K562 (cell line): ENCODE measurements at regions of chr17 and their contacts with region 1.

Region 1: DNA sequence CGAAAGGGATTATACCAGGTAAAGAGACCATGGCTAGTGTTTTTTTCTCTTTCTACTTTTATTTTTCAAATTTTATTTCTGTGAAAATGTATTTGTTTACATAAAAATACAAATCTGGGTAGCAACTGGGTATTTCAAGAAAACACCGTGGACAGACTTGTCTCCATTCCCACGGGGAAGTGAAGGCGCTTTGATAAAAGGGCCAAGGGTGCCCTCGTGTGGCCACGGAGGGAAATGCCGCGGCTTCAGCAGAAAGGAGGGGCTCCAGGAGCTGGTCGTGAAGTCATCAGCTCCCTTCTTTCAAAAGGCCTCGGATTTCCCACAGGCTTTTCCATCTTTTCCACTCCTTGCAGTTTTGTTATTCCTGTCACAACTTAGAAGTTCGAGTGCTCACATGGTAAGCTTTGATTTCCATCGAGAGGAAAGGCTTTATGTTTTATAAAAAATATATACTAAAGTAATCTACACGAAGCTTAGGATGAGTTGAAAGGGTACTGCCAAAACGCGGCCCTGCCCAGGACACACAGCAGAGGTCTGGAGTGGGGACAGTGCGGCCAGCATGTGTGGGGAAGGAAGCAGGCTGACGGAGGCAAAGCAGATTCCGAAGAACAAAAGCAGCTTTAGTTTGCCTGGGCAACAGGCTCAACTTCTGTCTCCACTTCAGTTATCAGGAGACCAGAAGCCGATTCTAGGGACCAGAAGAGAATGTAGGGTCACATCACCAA is 15.3 kb upstream of the MNT start:
- DNase-seq: peak; percentile 69 to 85 (median 74)
- ATAC-seq: peak; percentile 90
- H3K4me3 ChIP-seq: no peak overlapping the region
- H3K27ac ChIP-seq: no peak overlapping the region
- H3K4me1 ChIP-seq: no peaks in the 10 kb centered on the region; a peak in 1 of 5 replicates
- H3K27me3 ChIP-seq: no peaks in the 10 kb centered on the region
- CTCF ChIP-seq: peak; percentile 75 to 90 (median 89)
- EP300 ChIP-seq: no peak
- POLR2A ChIP-seq: no peak
- RAD21 ChIP-seq: peak; percentile 83 to 86

Region 2: GRCh38 chr17:2374549-2375277 is 41.5 kb before region 1 on chr17:
- CTCF ChIA-PET with region 1: interaction called, 78 read pairs
- POLR2A ChIA-PET with region 1: interaction called, 3 read pairs
- in situ Hi-C with region 1: loop called (anchors 5 kb)
- intact Hi-C with region 1: no loop called
- DNase-seq: no peak
- ATAC-seq: no peak
- H3K4me3 ChIP-seq: no peak overlapping the region
- H3K27ac ChIP-seq: no peak overlapping the region
- H3K4me1 ChIP-seq: peaks cover 0 to 21% of the 10 kb centered on the region in 2 experiments; a peak in 3 of 5 replicates
- H3K27me3 ChIP-seq: no peaks in the 10 kb centered on the region
- CTCF ChIP-seq: no peak
- EP300 ChIP-seq: no peak
- POLR2A ChIP-seq: no peak
- RAD21 ChIP-seq: no peak

Region 3: GRCh38 chr17:2380226-2380922 is 35.8 kb before region 1 on chr17:
- CTCF ChIA-PET with region 1: interaction called, 78 read pairs
- POLR2A ChIA-PET with region 1: interaction called, 31 read pairs
- in situ Hi-C with region 1: loop called (anchors 5 kb)
- intact Hi-C with region 1: loop called (anchors 1 kb)
- DNase-seq: no peak
- ATAC-seq: no peak
- H3K4me3 ChIP-seq: no peak overlapping the region
- H3K27ac ChIP-seq: no peak overlapping the region
- H3K4me1 ChIP-seq: peaks cover 14 to 35% of the 10 kb centered on the region in 2 experiments
- H3K27me3 ChIP-seq: no peaks in the 10 kb centered on the region
- CTCF ChIP-seq: no peak
- EP300 ChIP-seq: no peak
- POLR2A ChIP-seq: no peak
- RAD21 ChIP-seq: no peak

Region 4: GRCh38 chr17:2386400-2387085 is 29.6 kb before region 1 on chr17:
- CTCF ChIA-PET with region 1: interaction called, 78 read pairs
- POLR2A ChIA-PET with region 1: interaction called, 31 read pairs
- in situ Hi-C with region 1: no loop called
- intact Hi-C with region 1: loop called (anchors 1 kb)
- DNase-seq: no peak
- ATAC-seq: no peak
- H3K4me3 ChIP-seq: no peak overlapping the region
- H3K27ac ChIP-seq: no peak overlapping the region
- H3K4me1 ChIP-seq: peaks cover 24 to 49% of the 10 kb centered on the region in 2 experiments
- H3K27me3 ChIP-seq: no peaks in the 10 kb centered on the region
- CTCF ChIP-seq: no peak
- EP300 ChIP-seq: no peak
- POLR2A ChIP-seq: no peak
- RAD21 ChIP-seq: no peak